ENCODE measurements at regions of chr11 and their contacts with region 1.

Region 1: DNA sequence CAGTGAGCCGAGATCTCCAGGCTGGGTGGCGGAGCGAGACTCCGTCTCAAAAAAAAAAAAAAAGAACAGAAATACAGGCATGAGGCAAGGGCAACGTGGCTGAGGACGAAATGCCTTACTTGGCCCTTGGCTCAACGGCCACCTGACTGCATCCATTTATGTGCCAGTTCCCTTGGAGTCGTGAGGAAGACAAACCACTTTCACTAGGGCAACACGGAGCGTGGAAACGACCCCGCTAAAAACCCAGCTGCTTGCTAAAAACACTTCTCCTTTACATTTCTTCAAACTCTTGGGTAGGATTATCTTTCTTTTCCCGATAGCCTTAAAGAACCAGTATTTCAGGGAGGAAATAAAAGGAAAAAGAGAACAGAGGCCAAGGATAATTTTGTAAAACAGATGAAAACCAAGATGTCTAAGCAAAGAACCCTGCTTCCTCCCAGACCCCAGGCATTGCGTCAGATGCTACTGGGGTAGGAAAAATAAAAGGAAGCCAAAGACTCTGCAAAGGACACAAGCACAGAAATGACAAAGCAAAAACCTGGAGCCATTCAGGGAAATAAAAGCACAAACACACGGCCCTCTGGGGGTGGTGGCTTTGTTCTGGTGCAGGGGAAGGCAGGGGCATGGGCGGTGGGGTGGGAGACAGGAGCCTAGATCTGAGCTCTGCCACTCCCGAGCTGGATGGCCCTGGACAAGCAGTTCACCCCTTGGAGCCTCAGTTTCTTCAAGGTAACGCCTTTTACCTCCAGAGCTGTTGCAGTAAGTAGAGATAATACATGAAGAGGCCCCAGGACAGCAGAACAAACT is 37.0 kb downstream of the PC start:
- DNase-seq: no peak
- H3K4me3 ChIP-seq: no peak overlapping the region
- H3K27ac ChIP-seq: peak overlapping the region in 1 of 2 donors; percentile 64
- H3K4me1 ChIP-seq: no peaks in the 10 kb centered on the region
- H3K27me3 ChIP-seq: no peaks in the 10 kb centered on the region
- CTCF ChIP-seq: no peak
- POLR2A ChIP-seq: no peak

Region 2: DNA sequence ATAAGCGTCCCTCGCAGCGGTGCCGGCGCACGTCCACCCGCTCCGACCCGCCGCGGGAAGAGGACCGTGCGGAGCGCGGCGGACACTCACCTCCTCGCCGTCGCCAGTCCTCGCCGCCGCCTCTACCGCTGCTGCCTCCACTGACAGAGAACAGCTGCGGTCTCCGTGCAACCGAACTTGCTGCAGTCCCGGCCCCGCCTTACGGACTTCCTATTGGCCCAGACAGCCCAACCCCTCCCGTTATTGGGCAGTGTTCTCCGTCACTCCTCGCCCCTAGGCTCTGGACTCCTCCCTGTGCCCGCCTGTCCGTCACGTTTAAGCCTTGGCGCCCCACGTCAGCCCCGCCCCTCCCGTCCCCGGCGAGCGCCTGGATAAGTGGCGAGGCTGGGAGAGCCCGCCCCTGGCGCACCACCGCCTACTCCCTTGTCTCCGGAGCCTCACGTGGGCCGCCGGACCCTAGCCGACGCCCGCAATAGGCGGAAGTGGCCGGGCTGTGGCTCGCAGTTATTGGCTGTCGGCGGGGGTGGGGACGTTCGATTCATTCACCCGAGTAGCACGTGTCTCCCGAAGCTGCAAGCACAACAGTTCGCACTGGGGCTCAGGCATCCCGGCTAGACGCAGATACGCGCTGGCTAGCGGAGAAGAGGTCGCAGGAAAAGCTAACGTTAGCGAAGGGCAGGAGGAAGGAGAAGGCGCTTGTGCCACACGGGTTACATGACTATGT is 37.2 kb after region 1 on chr11 and contains the start of gene PC:
- intact Hi-C with region 1: no loop called
- DNase-seq: peak; percentile 100
- H3K4me3 ChIP-seq: peak within 1 kb of the TSS; percentile 47 to 81 (median 73)
- H3K27ac ChIP-seq: peak within 1 kb of the TSS; percentile 73 to 77
- H3K4me1 ChIP-seq: peaks cover 0 to 6% of the 10 kb centered on the region in 2 donors
- H3K27me3 ChIP-seq: no peaks in the 10 kb centered on the region
- CTCF ChIP-seq: no peak
- POLR2A ChIP-seq: peak; percentile 11
- total RNA-seq, gene PC: 35.4 to 137 (median 50.2) TPM

Region 3: DNA sequence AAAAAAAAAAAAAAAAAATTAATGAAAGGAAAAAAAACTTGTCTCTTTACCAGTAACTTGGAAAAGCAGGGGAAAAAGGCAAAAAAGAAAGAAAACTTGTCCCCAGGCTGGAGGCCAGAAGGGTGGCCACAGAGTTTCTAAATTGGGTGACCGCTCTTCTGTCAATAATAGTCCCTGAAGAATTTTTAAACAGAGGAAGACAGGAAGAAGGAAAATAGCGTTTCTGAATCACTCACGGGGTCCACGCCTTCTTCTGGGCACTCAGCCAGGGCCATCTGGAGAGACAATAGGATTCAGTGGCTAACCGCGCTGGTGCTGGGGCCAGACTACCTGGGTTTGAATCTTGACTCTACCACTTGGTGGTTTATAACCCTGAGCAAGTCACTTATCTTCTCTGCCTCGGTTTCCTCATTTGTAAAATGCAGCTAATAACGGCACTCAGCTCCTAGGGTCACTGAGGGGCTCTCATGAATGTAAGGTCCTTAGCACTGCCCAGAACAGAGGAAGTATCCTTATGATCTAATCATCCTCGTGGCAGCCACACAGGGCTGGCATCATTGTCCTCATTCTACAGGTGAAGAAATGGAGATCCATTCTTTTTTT is 60.9 kb after region 1 on chr11:
- intact Hi-C with region 1: no loop called
- DNase-seq: peak; percentile 83 to 92
- H3K4me3 ChIP-seq: no peak overlapping the region
- H3K27ac ChIP-seq: peak overlapping the region; percentile 37 to 55
- H3K4me1 ChIP-seq: peaks cover 0 to 7% of the 10 kb centered on the region in 2 donors
- H3K27me3 ChIP-seq: no peaks in the 10 kb centered on the region
- CTCF ChIP-seq: peak in 1 of 3 donors; percentile 9
- POLR2A ChIP-seq: no peak

Region 4: GRCh38 chr11:66999555-66999954 is 78.4 kb after region 1 on chr11:
- intact Hi-C with region 1: loop called (anchors 2 kb)
- DNase-seq: no peak
- H3K4me3 ChIP-seq: no peak overlapping the region
- H3K27ac ChIP-seq: no peak overlapping the region
- H3K4me1 ChIP-seq: no peaks in the 10 kb centered on the region
- H3K27me3 ChIP-seq: no peaks in the 10 kb centered on the region
- CTCF ChIP-seq: no peak
- POLR2A ChIP-seq: no peak